ENCODE measurements at regions of chr1 and their contacts with region 1.

Region 1: DNA sequence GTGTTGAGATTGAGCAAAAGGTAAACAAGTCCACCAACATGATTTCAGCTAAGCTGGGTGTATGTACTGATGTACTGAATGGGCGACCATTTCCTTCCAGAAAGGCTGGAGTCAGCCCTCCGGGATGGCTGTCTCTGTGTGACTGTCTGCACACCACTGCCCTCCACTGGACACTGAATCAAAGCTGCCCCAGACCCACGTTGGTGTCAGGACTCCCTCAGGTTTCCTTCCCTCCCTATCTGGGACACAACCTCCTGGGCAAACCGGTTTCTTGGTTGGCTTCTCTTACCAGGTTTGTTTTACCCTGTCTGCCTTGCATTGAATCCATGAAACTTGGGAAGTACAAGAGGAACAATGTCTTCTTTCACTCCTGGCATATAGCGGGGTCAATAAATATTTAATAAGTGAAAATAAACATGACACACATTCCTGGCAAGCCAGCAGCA is 5.3 kb upstream of the SRP9 start:
- DNase-seq: peak; percentile 87
- H3K4me3 ChIP-seq: peak overlapping the region in 1 of 3 experiments; percentile 18
- H3K27ac ChIP-seq: no peak overlapping the region
- H3K4me1 ChIP-seq: peaks cover 40% of the 10 kb centered on the region
- H3K27me3 ChIP-seq: no peaks in the 10 kb centered on the region
- CTCF ChIP-seq: peak; percentile 94 to 96

Region 2: GRCh38 chr1:225480825-225481434 is 291.4 kb before region 1 on chr1:
- CTCF ChIA-PET with region 1: interaction called, 9 read pairs
- dilution Hi-C with region 1: loop called (anchors 5 kb)
- in situ Hi-C with region 1: loop called (anchors 5 to 10 kb)
- intact Hi-C with region 1: loop called (anchors 1 kb)
- DNase-seq: peak; percentile 28
- H3K4me3 ChIP-seq: no peak overlapping the region
- H3K27ac ChIP-seq: no peak overlapping the region
- H3K4me1 ChIP-seq: no peaks in the 10 kb centered on the region
- H3K27me3 ChIP-seq: no peaks in the 10 kb centered on the region
- CTCF ChIP-seq: peak; percentile 93 to 95

Region 3: DNA sequence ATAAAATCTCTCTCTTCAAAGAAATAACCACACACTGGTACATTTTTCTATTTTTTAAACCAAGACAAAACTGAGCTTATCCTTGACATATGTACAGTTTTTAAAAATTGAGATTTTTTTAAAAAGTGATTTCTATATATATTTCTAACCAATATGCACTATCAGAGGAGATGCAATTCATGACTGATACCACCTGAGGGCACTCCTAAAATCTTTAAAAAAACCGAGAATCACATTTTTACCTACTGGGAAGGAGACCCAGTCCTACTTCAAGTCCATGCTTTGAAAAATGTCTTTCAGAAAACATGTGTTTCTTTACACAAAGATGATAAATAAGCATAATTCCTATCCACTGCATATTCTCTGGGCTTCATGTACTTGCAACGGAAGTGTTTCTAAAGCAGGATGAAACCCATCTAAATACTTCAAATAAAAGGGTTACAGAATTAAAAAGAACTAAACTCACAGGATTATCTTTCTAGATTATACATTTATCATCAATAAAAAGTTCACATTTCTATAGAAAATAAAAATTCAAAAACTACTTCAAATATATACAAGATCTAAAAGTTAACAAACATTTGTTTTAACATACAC is 218.0 kb before region 1 on chr1:
- CTCF ChIA-PET with region 1: no interaction called
- dilution Hi-C with region 1: loop called (anchors 5 kb)
- in situ Hi-C with region 1: loop called in 1 of 2 experiments (anchors 10 kb)
- intact Hi-C with region 1: loop called (anchors 1 kb)
- DNase-seq: no peak
- H3K4me3 ChIP-seq: no peak overlapping the region
- H3K27ac ChIP-seq: no peak overlapping the region
- H3K4me1 ChIP-seq: no peaks in the 10 kb centered on the region
- H3K27me3 ChIP-seq: no peaks in the 10 kb centered on the region
- CTCF ChIP-seq: peak; percentile 52 to 57

Region 4: GRCh38 chr1:225567590-225568194 is 204.7 kb before region 1 on chr1:
- CTCF ChIA-PET with region 1: no interaction called
- dilution Hi-C with region 1: no loop called
- in situ Hi-C with region 1: no loop called
- intact Hi-C with region 1: loop called (anchors 1 kb)
- DNase-seq: no peak
- H3K4me3 ChIP-seq: no peak overlapping the region
- H3K27ac ChIP-seq: no peak overlapping the region
- H3K4me1 ChIP-seq: no peaks in the 10 kb centered on the region
- H3K27me3 ChIP-seq: no peaks in the 10 kb centered on the region
- CTCF ChIP-seq: peak in 1 of 2 donors; percentile 14

Region 5: GRCh38 chr1:225700164-225700740 is 72.1 kb before region 1 on chr1:
- CTCF ChIA-PET with region 1: no interaction called
- dilution Hi-C with region 1: no loop called
- in situ Hi-C with region 1: no loop called
- intact Hi-C with region 1: loop called (anchors 1 kb)
- DNase-seq: peak; percentile 100
- H3K4me3 ChIP-seq: no peak overlapping the region
- H3K27ac ChIP-seq: peak overlapping the region; percentile 79
- H3K4me1 ChIP-seq: peaks cover 19% of the 10 kb centered on the region
- H3K27me3 ChIP-seq: no peaks in the 10 kb centered on the region
- CTCF ChIP-seq: no peak

Region 6: DNA sequence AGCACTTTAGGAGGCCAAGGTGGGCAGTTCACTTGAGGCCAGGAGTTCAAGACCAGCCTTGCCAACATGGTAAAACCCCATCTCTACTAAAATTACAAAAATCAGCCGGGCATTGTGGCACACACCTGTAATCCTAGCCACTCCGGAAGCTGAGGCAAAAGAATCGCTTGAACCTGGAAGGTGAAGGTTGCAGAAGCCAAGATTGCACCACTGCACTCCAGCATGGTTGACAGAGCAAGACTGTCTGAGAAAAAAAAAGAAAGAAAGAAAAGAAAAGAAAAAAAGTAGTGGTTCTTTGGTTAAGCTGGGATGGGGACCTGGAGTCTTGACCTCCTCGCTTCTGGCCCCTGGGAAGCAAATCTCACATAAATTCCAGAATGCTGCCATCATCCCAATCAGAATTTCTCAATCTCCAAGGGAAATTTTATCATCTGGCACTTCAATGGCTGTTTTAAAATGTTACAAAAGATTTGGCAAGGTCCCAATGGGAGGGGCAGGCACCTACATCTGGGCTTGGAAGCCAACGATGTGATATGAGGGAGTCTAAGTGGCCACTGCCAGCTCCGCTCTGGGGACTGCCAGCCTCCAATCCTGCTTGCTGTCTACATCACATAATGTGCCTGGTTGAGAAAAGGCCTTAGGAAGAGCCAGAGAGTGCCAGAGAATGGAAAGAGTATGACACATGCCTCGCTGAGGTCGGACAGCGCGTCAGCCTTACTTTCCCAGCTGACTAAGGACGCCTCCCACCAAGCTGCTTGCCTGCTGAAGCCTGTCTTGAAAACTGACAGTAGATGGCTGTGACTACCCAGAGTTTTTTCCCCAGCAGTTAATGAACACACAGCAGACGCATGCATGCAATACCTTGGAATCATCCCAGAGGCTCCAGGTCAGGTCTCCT is 36.8 kb before region 1 on chr1:
- CTCF ChIA-PET with region 1: no interaction called
- dilution Hi-C with region 1: no loop called
- in situ Hi-C with region 1: no loop called
- intact Hi-C with region 1: loop called (anchors 1 kb)
- DNase-seq: peak; percentile 97
- H3K4me3 ChIP-seq: peak overlapping the region in 1 of 3 experiments; percentile 31
- H3K27ac ChIP-seq: peak overlapping the region; percentile 72
- H3K4me1 ChIP-seq: peaks cover 29% of the 10 kb centered on the region
- H3K27me3 ChIP-seq: no peaks in the 10 kb centered on the region
- CTCF ChIP-seq: peak; percentile 9 to 31